SK-N-SH (cell line): ENCODE measurements at regions of chr17 and their contacts with region 1.

Region 1: DNA sequence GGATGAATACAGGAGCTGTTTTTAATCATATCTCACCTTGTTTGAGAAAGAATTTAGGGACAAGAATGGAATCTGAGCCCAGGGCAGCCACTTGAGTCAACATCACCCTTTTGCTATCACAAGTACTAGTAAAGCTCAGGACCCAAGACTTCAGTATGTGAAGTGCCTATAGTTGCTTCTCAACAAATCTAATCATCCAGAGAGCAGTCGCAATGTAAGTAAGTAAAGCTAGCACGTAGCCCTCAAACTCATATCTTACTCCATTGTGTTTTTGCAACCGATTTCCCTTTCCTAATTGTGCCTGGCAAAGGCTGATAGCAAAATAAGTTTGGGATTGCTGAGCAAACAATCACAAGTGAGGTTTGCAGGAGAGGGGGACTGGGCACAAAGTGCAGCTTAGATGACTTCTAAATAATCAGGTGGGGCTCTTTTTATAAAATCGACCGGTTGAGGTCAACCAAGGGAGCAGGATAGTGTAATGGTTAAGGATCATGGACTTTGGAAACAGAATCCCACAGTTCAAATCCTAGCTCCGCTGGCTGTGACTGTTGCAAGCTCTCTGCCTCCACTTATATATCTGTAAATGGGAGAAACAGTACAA is 13.0 kb downstream of the TOB1 start:
- DNase-seq: no peak
- H3K4me3 ChIP-seq: no peak overlapping the region
- H3K27ac ChIP-seq: no peak overlapping the region
- H3K4me1 ChIP-seq: peaks cover 0 to 9% of the 10 kb centered on the region in 2 experiments; a peak in 1 of 4 replicates
- H3K27me3 ChIP-seq: no peaks in the 10 kb centered on the region
- CTCF ChIP-seq: no peak
- EP300 ChIP-seq: no peak
- RAD21 ChIP-seq: no peak

Region 2: DNA sequence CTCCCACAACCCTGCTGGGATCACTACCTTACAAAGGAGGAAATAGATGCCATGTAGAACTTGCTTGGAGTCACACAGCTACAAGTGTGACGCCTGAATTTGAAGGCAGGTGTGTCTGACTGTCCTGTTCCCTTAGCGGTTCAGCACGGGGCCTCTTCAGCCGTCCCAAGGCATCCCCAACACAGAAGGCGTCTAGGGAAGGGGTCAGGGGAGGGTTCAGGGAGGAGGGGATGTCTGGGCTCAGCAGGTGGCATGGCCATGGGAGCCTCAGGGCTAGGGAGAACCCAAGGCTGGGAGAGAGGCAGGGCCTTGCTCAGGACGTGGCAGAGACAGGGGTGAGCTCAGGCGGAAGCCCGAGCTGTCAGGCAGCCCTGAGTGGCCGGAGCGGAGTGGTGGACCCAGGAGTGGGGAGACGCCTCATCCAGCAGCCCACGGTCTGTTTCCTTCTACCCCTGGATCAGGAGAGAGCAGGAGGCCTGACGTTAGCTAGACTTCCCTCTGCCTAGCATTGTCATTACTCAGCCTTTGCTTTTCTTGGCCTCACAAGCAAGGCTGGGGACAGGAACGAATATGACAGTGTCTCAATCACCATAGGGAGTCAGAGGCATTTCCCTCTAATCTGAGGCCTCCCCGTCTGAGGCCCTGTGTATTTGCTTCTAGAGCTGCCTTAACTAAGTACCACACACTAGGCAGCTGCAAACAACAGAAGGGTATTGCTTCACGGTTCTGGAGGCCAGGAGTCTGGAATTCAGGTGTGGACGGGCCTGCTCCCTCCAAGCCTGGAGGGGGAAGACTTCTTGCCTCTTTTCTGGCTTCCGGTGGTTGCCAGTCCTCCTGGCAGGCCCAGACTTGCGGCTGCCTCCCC is 54.5 kb before region 1 on chr17:
- CTCF ChIA-PET with region 1: interaction called, 13 read pairs
- POLR2A ChIA-PET with region 1: no interaction called
- DNase-seq: no peak
- H3K4me3 ChIP-seq: no peak overlapping the region
- H3K27ac ChIP-seq: no peak overlapping the region
- H3K4me1 ChIP-seq: peaks cover 0 to 7% of the 10 kb centered on the region in 2 experiments; a peak in 1 of 4 replicates
- H3K27me3 ChIP-seq: no peaks in the 10 kb centered on the region
- CTCF ChIP-seq: no peak
- EP300 ChIP-seq: no peak
- RAD21 ChIP-seq: no peak

Region 3: GRCh38 chr17:50834429-50835300 is 18.4 kb before region 1 on chr17:
- CTCF ChIA-PET with region 1: interaction called, 80 read pairs
- POLR2A ChIA-PET with region 1: interaction called, 5 read pairs
- DNase-seq: no peak
- H3K4me3 ChIP-seq: no peak overlapping the region
- H3K27ac ChIP-seq: no peak overlapping the region
- H3K4me1 ChIP-seq: peaks cover 0 to 12% of the 10 kb centered on the region in 2 experiments; a peak in 1 of 4 replicates
- H3K27me3 ChIP-seq: no peaks in the 10 kb centered on the region; the same call in 1 of the 2 replicates
- CTCF ChIP-seq: no peak
- EP300 ChIP-seq: no peak
- RAD21 ChIP-seq: no peak

Region 4: DNA sequence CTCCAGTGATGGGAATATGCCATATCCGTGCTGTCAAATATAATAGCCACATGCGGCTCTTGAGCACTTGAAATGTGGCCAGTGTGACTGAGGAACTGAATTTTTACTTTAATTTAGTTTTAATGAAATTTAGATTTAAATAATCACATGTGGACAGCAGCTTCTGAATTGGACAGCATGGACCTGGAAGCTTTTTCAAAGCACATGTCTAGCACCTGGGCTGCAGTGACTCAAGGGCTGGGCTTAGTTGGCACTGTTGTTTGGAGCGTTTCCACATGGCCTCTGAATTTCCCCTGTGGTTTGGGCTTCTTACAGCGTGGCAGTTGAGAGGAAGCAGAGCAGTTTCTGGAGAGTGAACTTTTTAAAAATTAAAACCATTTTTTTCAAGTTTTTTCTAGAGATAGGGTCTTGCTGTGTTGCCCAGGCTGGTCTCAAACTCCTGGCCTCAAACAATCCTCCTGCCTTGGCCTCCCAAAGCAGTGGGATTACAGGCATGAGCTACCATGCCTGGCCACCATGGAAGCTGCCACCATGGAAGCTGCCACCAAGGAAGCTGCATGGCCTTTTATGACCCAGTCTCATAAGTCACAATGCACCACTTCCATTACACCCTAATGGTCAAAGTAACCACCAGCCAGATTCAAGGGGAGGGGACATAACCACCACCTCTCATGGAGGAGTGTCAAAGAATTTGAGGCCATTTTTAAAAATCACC is 19.8 kb after region 1 on chr17:
- CTCF ChIA-PET with region 1: interaction called, 14 read pairs
- POLR2A ChIA-PET with region 1: interaction called, 72 read pairs
- DNase-seq: no peak
- H3K4me3 ChIP-seq: no peak overlapping the region
- H3K27ac ChIP-seq: peak overlapping the region in 1 of 2 experiments; percentile 84; a peak in 2 of 4 replicates
- H3K4me1 ChIP-seq: peaks cover 0 to 30% of the 10 kb centered on the region in 2 experiments; a peak in 2 of 4 replicates
- H3K27me3 ChIP-seq: no peaks in the 10 kb centered on the region
- CTCF ChIP-seq: no peak
- EP300 ChIP-seq: peak; percentile 16 to 39; a peak in 2 of 4 replicates
- RAD21 ChIP-seq: no peak

Region 5: GRCh38 chr17:50956750-50957523 is 103.8 kb after region 1 on chr17:
- CTCF ChIA-PET with region 1: interaction called, 820 read pairs
- POLR2A ChIA-PET with region 1: interaction called, 10 read pairs
- DNase-seq: peak; percentile 75
- H3K4me3 ChIP-seq: no peak overlapping the region; a peak in 1 of 4 replicates
- H3K27ac ChIP-seq: peak overlapping the region in 1 of 2 experiments; percentile 39; a peak in 1 of 4 replicates
- H3K4me1 ChIP-seq: peaks cover 16 to 55% of the 10 kb centered on the region in 2 experiments
- H3K27me3 ChIP-seq: no peaks in the 10 kb centered on the region
- CTCF ChIP-seq: peak; percentile 90
- EP300 ChIP-seq: no peak
- RAD21 ChIP-seq: peak; percentile 89

Region 6: DNA sequence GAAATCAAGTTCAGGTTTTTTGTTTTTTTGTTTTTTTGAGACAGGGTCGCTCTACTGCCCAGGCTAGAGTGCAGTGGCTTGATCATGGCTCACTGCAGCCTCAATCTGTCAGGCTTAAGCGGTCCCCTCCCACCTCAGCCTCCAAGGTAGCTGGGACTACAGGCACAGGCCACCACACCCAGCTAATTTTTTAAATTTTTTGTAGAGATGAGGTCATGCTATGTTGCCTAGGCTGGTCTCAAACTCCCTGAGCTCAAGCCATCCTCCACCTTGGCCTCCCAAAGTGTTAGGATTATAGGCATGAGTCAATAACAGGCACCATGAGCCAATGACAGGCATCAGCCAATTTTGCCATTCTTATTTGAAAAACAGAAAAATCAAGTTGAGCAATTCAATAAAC is 142.5 kb after region 1 on chr17:
- CTCF ChIA-PET with region 1: interaction called, 36 read pairs
- POLR2A ChIA-PET with region 1: no interaction called
- DNase-seq: no peak
- H3K4me3 ChIP-seq: no peak overlapping the region
- H3K27ac ChIP-seq: no peak overlapping the region
- H3K4me1 ChIP-seq: no peaks in the 10 kb centered on the region
- H3K27me3 ChIP-seq: no peaks in the 10 kb centered on the region
- CTCF ChIP-seq: no peak
- EP300 ChIP-seq: no peak
- RAD21 ChIP-seq: no peak

Region 7: GRCh38 chr17:51046514-51047384 is 193.6 kb after region 1 on chr17:
- CTCF ChIA-PET with region 1: interaction called, 17 read pairs
- POLR2A ChIA-PET with region 1: no interaction called
- DNase-seq: peak; percentile 84
- H3K4me3 ChIP-seq: peak overlapping the region; percentile 56 to 60
- H3K27ac ChIP-seq: peak overlapping the region; percentile 71 to 94
- H3K4me1 ChIP-seq: peaks cover 26 to 32% of the 10 kb centered on the region in 2 experiments
- H3K27me3 ChIP-seq: no peaks in the 10 kb centered on the region
- CTCF ChIP-seq: no peak; the same call in 1 of the 2 replicates
- EP300 ChIP-seq: peak in 1 of 2 experiments; percentile 57; a peak in 2 of 4 replicates
- RAD21 ChIP-seq: no peak